Activated T-helper 1 cell treated with anti-CD3 and anti-CD28 coated beads, Interleukin-12 subunit alpha, Interleukin-12 subunit beta, Interleukin-2, Interleukin-4 antibody, amounts not matched to agents 30 ng/mL and 10 ng/mL and 1 ng/mL, durations not matched to agents 14 hours and 24 hours and 36 hours (primary cell): ENCODE measurements at regions of chr22 and their contacts with region 1.

Region 1: GRCh38 chr22:24156913-24157821 is 24.1 kb upstream of the SUSD2 start:
- DNase-seq: peak; percentile 84
- H3K4me3 Mint-ChIP-seq: peak overlapping the region; percentile 84
- H3K27ac Mint-ChIP-seq: peak overlapping the region; percentile 91
- H3K4me1 Mint-ChIP-seq: peaks cover 60% of the 10 kb centered on the region
- H3K27me3 Mint-ChIP-seq: no peaks in the 10 kb centered on the region

Region 2: GRCh38 chr22:23984430-23984829 is 172.7 kb before region 1 on chr22:
- intact Hi-C with region 1: loop called (anchors 5 kb)
- DNase-seq: peak; percentile 43
- H3K4me3 Mint-ChIP-seq: no peak overlapping the region
- H3K27ac Mint-ChIP-seq: no peak overlapping the region
- H3K4me1 Mint-ChIP-seq: peaks cover 11% of the 10 kb centered on the region
- H3K27me3 Mint-ChIP-seq: peaks cover 3% of the 10 kb centered on the region

Region 3: DNA sequence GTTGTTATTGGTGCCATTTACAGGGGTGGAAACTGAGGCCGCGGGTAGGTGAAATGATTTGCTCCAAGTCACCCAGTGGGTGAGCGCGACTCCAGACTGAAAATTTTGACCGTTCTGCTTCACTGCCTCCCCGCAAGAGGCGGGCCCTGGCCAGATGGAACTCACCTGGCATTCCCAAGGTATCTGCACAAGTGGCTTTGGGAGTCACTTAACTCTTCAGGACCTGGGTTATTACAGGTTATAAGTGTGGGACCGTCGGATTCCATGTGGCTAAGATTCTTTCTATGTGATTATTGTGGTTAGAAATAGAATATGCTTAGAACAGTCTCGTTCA is 145.5 kb before region 1 on chr22:
- intact Hi-C with region 1: loop called (anchors 1 kb)
- DNase-seq: no peak
- H3K4me3 Mint-ChIP-seq: peak overlapping the region; percentile 92
- H3K27ac Mint-ChIP-seq: peak overlapping the region; percentile 98
- H3K4me1 Mint-ChIP-seq: peaks cover 35% of the 10 kb centered on the region
- H3K27me3 Mint-ChIP-seq: no peaks in the 10 kb centered on the region

Region 4: GRCh38 chr22:24106385-24107381 is 50.5 kb before region 1 on chr22:
- intact Hi-C with region 1: loop called (anchors 2 kb)
- DNase-seq: peak; percentile 5
- H3K4me3 Mint-ChIP-seq: peak overlapping the region; percentile 34
- H3K27ac Mint-ChIP-seq: peak overlapping the region; percentile 78
- H3K4me1 Mint-ChIP-seq: peaks cover 42% of the 10 kb centered on the region
- H3K27me3 Mint-ChIP-seq: no peaks in the 10 kb centered on the region

Region 5: DNA sequence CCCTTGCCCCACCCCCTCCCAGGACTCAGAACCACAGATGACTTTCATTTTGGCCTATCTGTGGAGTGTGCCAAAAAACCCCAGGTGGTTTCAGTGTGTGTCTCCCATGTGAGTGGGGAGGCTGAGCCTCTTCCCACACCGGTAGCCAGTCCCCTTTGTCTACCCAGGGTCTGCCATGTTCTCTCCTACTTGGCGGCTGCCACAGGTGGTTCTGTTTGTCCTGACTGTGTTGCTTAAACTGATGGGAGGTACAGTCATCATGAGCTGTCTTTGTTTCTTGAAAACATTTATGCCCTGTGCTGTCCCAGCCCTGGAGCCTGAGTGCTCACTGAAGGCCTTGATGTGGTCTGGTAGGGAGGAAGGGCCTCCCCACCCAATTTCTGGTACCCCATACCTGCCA is 15.6 kb before region 1 on chr22:
- intact Hi-C with region 1: loop called (anchors 1 kb)
- DNase-seq: no peak
- H3K4me3 Mint-ChIP-seq: no peak overlapping the region
- H3K27ac Mint-ChIP-seq: peak overlapping the region; percentile 34
- H3K4me1 Mint-ChIP-seq: peaks cover 40% of the 10 kb centered on the region
- H3K27me3 Mint-ChIP-seq: no peaks in the 10 kb centered on the region

Region 6: GRCh38 chr22:24189249-24190158 is 32.3 kb after region 1 on chr22:
- intact Hi-C with region 1: no loop called
- DNase-seq: peak; percentile 53
- H3K4me3 Mint-ChIP-seq: no peak overlapping the region
- H3K27ac Mint-ChIP-seq: peak overlapping the region; percentile 28
- H3K4me1 Mint-ChIP-seq: peaks cover 8% of the 10 kb centered on the region
- H3K27me3 Mint-ChIP-seq: no peaks in the 10 kb centered on the region

Region 7: DNA sequence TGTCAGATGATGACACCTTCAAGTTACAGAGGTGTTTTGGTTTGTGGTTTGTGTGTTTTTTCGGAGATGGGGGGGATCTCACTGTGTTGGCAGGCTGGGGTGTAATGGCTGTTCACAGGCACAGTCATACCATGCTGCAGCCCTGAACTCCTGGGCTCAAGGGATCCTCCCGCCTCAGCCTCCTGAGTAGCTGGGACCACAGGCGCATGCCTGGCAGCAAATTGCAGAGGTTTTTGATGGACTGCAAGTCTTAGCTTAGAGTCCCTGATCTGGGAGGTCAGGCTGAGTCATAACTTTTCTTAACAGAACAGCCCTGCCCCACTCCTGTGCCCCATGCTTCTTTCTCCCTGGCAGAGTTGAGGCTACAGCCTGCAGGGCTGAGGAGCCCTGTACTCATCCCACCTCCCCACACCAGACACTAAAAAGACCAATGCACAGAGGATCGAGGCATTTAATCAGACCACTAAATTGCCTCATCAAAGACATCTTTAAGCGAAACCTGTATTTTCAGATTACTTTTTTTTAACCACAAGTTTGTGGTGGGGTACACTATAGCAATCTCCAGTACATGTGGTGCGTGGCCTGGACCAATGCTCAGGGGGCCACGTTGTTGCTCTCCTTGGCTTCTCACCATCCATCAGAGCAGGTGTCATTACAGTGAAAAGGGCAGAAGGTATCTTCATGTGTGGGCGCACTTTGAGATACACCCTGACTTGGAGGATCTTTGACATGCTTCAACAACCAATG is 253.1 kb after region 1 on chr22:
- intact Hi-C with region 1: no loop called
- DNase-seq: no peak
- H3K4me3 Mint-ChIP-seq: no peak overlapping the region
- H3K27ac Mint-ChIP-seq: peak overlapping the region; percentile 77
- H3K4me1 Mint-ChIP-seq: peaks cover 27% of the 10 kb centered on the region
- H3K27me3 Mint-ChIP-seq: no peaks in the 10 kb centered on the region